ENCODE measurements at regions of chr15 and their contacts with region 1.

Region 1: GRCh38 chr15:32104061-32104995 is 74.0 kb downstream of the CHRNA7 start:
- DNase-seq: no peak
- H3K4me3 ChIP-seq: no peak overlapping the region
- H3K27ac ChIP-seq: no peak overlapping the region
- H3K4me1 ChIP-seq: peaks cover 0 to 9% (median 0%) of the 10 kb centered on the region in 4 donors
- H3K27me3 ChIP-seq: no peaks in the 10 kb centered on the region
- CTCF ChIP-seq: no peak
- EP300 ChIP-seq: no peak
- POLR2A ChIP-seq: no peak

Region 2: GRCh38 chr15:30675126-30675525 is 1429.2 kb before region 1 on chr15:
- in situ Hi-C with region 1: no loop called
- intact Hi-C with region 1: loop called (anchors 5 kb)
- DNase-seq: no peak
- H3K4me3 ChIP-seq: no peak overlapping the region
- H3K27ac ChIP-seq: no peak overlapping the region
- H3K4me1 ChIP-seq: no peaks in the 10 kb centered on the region
- H3K27me3 ChIP-seq: no peaks in the 10 kb centered on the region
- CTCF ChIP-seq: no peak
- EP300 ChIP-seq: no peak
- POLR2A ChIP-seq: no peak

Region 3: GRCh38 chr15:31840849-31841476 is 263.4 kb before region 1 on chr15:
- in situ Hi-C with region 1: no loop called
- intact Hi-C with region 1: no loop called
- DNase-seq: no peak
- H3K4me3 ChIP-seq: no peak overlapping the region
- H3K27ac ChIP-seq: no peak overlapping the region
- H3K4me1 ChIP-seq: no peaks in the 10 kb centered on the region
- H3K27me3 ChIP-seq: no peaks in the 10 kb centered on the region
- CTCF ChIP-seq: no peak
- EP300 ChIP-seq: no peak
- POLR2A ChIP-seq: no peak

Region 4: GRCh38 chr15:32089851-32090359 is 14.4 kb before region 1 on chr15:
- in situ Hi-C with region 1: no loop called
- intact Hi-C with region 1: no loop called
- DNase-seq: no peak
- H3K4me3 ChIP-seq: no peak overlapping the region
- H3K27ac ChIP-seq: no peak overlapping the region
- H3K4me1 ChIP-seq: no peaks in the 10 kb centered on the region
- H3K27me3 ChIP-seq: no peaks in the 10 kb centered on the region
- CTCF ChIP-seq: no peak
- EP300 ChIP-seq: no peak
- POLR2A ChIP-seq: no peak

Region 5: GRCh38 chr15:32148833-32149555 is 44.7 kb after region 1 on chr15:
- in situ Hi-C with region 1: loop called in 1 of 4 experiments (anchors 5 kb)
- intact Hi-C with region 1: no loop called
- DNase-seq: no peak
- H3K4me3 ChIP-seq: no peak overlapping the region
- H3K27ac ChIP-seq: no peak overlapping the region
- H3K4me1 ChIP-seq: no peaks in the 10 kb centered on the region
- H3K27me3 ChIP-seq: no peaks in the 10 kb centered on the region
- CTCF ChIP-seq: no peak
- EP300 ChIP-seq: no peak
- POLR2A ChIP-seq: no peak

Region 6: DNA sequence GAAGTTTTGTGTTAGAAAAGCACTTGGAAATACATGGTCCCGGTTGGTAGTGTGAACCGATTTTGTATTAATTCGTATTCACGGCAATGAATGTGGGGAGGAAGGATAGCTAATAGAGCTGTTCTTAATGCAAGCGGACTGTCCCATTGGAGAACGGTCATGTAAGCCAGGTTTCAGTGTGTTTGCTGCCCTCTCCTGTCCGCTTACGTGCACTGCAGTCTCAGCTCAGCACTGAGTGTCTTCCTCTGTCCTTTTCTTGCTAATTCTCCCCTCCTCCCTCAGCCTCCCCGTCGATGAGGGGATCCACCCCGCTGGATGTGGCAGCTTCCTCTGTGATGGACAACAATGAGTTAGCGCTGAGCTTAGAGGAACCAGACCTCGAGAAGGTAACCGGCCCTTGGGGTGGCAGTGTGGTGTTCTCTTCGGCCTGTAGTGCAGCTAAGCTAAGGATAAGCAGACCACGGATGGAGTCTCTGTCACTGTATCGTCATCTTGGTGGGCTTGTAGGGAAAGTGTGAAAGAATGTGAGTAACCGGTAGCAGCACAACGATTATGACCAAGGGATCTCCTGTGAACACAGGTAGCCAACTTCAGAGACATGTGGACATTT is 1596.5 kb after region 1 on chr15:
- in situ Hi-C with region 1: no loop called
- intact Hi-C with region 1: no loop called
- DNase-seq: peak; percentile 53
- H3K4me3 ChIP-seq: no peak overlapping the region
- H3K27ac ChIP-seq: no peak overlapping the region
- H3K4me1 ChIP-seq: no peaks in the 10 kb centered on the region
- H3K27me3 ChIP-seq: no peaks in the 10 kb centered on the region
- CTCF ChIP-seq: peak; percentile 72 to 87 (median 83)
- EP300 ChIP-seq: no peak
- POLR2A ChIP-seq: no peak

Measured in transverse colon (tissue), 4 donors.